Vagina (tissue), 2 donors: ENCODE measurements at regions of chr12 and their contacts with region 1.

Region 1: DNA sequence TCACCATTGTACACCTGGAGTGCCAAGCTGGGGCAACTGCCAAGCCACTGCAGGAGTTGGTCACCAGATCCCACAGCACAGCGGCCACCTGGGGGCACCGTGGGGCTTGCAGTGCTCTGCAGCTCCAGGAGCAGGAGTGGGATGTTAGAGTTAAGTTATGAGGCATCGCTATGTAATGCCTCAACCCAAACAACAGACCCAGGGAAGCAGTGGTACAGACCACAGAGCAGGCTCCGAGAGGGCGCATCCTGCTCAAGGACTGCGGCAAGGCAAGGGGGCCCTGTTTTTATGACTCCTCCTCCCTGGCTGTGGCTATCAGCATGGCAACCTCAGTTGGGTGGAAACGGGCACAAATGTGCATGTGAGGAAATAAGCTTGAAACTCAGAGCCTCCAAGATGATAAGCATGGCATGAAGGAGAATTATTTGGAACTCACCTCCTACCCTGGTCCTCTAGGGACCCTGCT is 63.1 kb downstream of the ARL6IP4 start:
- DNase-seq: no peak
- H3K4me3 ChIP-seq: no peak overlapping the region
- H3K27ac ChIP-seq: peak overlapping the region; percentile 89
- H3K4me1 ChIP-seq: peaks cover 20% of the 10 kb centered on the region
- H3K27me3 ChIP-seq: no peaks in the 10 kb centered on the region
- CTCF ChIP-seq: peak; percentile 20 to 71 (median 50)
- POLR2A ChIP-seq: no peak

Region 2: DNA sequence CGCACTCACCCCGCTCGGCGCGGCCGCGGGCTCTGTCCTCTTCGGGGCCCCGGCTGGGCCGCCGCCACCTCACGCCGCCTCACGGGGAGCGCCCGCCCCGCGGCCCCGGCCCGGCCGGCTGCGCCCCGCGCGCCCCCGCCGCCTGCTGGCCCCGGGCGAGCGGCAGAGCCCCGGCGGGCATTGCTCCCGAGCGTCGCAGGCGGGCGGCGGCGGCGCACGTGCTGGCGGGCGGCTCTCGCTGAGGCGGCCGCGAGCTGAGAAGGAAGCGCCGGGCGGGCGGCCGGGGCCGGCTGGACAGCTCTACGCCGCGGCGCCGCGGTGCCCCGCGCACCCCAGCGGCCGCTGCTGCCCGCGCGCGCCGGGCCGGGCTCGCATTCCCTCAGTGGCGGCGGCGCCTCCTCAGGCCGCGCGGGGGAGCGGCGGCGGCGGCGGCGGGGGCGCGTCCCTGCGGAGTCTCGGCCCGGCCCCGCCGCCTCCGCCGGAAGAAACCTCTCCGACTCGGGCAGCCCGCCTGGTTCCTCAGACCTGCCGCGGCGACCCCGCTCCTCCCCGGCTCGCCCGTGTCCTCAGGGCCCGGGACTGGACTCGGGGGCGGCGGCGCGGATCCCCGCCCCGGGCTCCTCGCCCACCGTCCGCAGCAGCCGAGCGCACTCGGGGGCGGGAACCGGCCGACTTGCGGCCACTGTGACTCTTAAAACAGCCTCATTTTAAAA is 107.3 kb after region 1 on chr12 and contains the start of gene PITPNM2:
- intact Hi-C with region 1: loop called (anchors 2 kb)
- DNase-seq: peak in 1 of 2 donors; percentile 49
- H3K4me3 ChIP-seq: peak within 1 kb of the TSS; percentile 77 to 90
- H3K27ac ChIP-seq: peak within 1 kb of the TSS; percentile 94
- H3K4me1 ChIP-seq: peaks cover 30% of the 10 kb centered on the region
- H3K27me3 ChIP-seq: no peaks in the 10 kb centered on the region
- CTCF ChIP-seq: peak in 1 of 3 experiments; percentile 18
- POLR2A ChIP-seq: no peak
- total RNA-seq, gene PITPNM2: 8.1 TPM

Region 3: GRCh38 chr12:123232807-123233543 is 189.4 kb after region 1 on chr12 and contains the starts of genes MPHOSPH9 and MTRFR:
- intact Hi-C with region 1: loop called (anchors 5 kb)
- DNase-seq: peak; percentile 99 to 100
- H3K4me3 ChIP-seq: peak within 1 kb of the TSS; percentile 85 to 99
- H3K27ac ChIP-seq: peak within 1 kb of the TSS; percentile 94
- H3K4me1 ChIP-seq: peaks cover 46% of the 10 kb centered on the region
- H3K27me3 ChIP-seq: no peaks in the 10 kb centered on the region
- CTCF ChIP-seq: peak in 1 of 3 experiments; percentile 12
- POLR2A ChIP-seq: peak; percentile 67 to 95
- total RNA-seq, gene MPHOSPH9: 17.9 TPM
- total RNA-seq, gene MTRFR: 12.8 TPM

Region 4: GRCh38 chr12:123379386-123379785 is 335.8 kb after region 1 on chr12:
- intact Hi-C with region 1: no loop called
- DNase-seq: no peak
- H3K4me3 ChIP-seq: no peak overlapping the region
- H3K27ac ChIP-seq: no peak overlapping the region
- H3K4me1 ChIP-seq: peaks cover 8% of the 10 kb centered on the region
- H3K27me3 ChIP-seq: no peaks in the 10 kb centered on the region
- CTCF ChIP-seq: no peak
- POLR2A ChIP-seq: no peak